Activated CD4-positive, alpha-beta memory T cell treated with anti-CD3 and anti-CD28 coated beads, Interleukin-2, amount 10 ng/mL, durations not matched to agents 7 days and 5 days (primary cell): ENCODE measurements at regions of chrX and their contacts with region 1.

Region 1: GRCh38 chrX:111098874-111099273 is 2.9 kb downstream of the PAK3 start:
- DNase-seq: peak; percentile 71
- H3K4me3 Mint-ChIP-seq: no peak overlapping the region
- H3K27ac Mint-ChIP-seq: peak overlapping the region; percentile 45
- H3K4me1 Mint-ChIP-seq: peaks cover 31% of the 10 kb centered on the region
- H3K27me3 Mint-ChIP-seq: peaks cover 12% of the 10 kb centered on the region

Region 2: GRCh38 chrX:110569506-110569905 is 529.4 kb before region 1 on chrX:
- CTCF ChIA-PET with region 1: no interaction called
- POLR2A ChIA-PET with region 1: no interaction called
- DNase-seq: no peak
- H3K4me3 Mint-ChIP-seq: no peak overlapping the region
- H3K27ac Mint-ChIP-seq: no peak overlapping the region
- H3K4me1 Mint-ChIP-seq: peaks cover 6% of the 10 kb centered on the region
- H3K27me3 Mint-ChIP-seq: no peaks in the 10 kb centered on the region

Region 3: DNA sequence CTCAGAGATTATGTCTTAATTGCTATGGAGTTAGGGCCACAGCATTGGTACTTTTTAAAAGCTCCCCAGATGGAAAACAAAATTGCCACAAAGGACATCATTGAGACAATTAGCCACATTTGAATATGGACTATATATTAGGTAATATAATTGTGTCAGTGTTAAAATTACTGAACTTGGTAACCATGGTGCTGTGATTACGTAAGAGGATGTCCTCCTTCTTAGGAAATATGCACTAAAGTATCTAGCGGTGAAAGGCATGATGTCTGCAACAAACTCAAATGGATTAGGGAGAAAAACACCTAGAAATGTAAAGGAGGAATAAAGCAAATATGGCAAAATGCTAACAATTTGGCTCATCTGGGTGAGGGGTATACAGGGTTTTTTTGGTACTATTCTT is 92.8 kb before region 1 on chrX:
- CTCF ChIA-PET with region 1: no interaction called
- POLR2A ChIA-PET with region 1: no interaction called
- DNase-seq: no peak
- H3K4me3 Mint-ChIP-seq: no peak overlapping the region
- H3K27ac Mint-ChIP-seq: no peak overlapping the region
- H3K4me1 Mint-ChIP-seq: no peaks in the 10 kb centered on the region
- H3K27me3 Mint-ChIP-seq: peaks cover 2% of the 10 kb centered on the region

Region 4: GRCh38 chrX:111114801-111115200 is 15.9 kb after region 1 on chrX:
- CTCF ChIA-PET with region 1: interaction called, 10 read pairs
- POLR2A ChIA-PET with region 1: no interaction called
- DNase-seq: no peak
- H3K4me3 Mint-ChIP-seq: no peak overlapping the region
- H3K27ac Mint-ChIP-seq: no peak overlapping the region
- H3K4me1 Mint-ChIP-seq: no peaks in the 10 kb centered on the region
- H3K27me3 Mint-ChIP-seq: no peaks in the 10 kb centered on the region

Region 5: GRCh38 chrX:111200327-111200726 is 101.5 kb after region 1 on chrX:
- CTCF ChIA-PET with region 1: no interaction called
- POLR2A ChIA-PET with region 1: no interaction called
- DNase-seq: no peak
- H3K4me3 Mint-ChIP-seq: no peak overlapping the region
- H3K27ac Mint-ChIP-seq: no peak overlapping the region
- H3K4me1 Mint-ChIP-seq: no peaks in the 10 kb centered on the region
- H3K27me3 Mint-ChIP-seq: no peaks in the 10 kb centered on the region